BJ (cell line): ENCODE measurements at regions of chr5 and their contacts with region 1.

Region 1: GRCh38 chr5:57298295-57298984 is 124.6 kb downstream of the GPBP1 start:
- DNase-seq: peak; percentile 19
- H3K4me3 ChIP-seq: no peak overlapping the region
- H3K27me3 ChIP-seq: no peaks in the 10 kb centered on the region
- CTCF ChIP-seq: peak; percentile 86

Region 2: GRCh38 chr5:57172466-57173031 is 125.9 kb before region 1 on chr5:
- CTCF ChIA-PET with region 1: no interaction called
- POLR2A ChIA-PET with region 1: no interaction called
- DNase-seq: no peak
- H3K4me3 ChIP-seq: peak overlapping the region; percentile 98
- H3K27me3 ChIP-seq: no peaks in the 10 kb centered on the region
- CTCF ChIP-seq: no peak

Region 3: DNA sequence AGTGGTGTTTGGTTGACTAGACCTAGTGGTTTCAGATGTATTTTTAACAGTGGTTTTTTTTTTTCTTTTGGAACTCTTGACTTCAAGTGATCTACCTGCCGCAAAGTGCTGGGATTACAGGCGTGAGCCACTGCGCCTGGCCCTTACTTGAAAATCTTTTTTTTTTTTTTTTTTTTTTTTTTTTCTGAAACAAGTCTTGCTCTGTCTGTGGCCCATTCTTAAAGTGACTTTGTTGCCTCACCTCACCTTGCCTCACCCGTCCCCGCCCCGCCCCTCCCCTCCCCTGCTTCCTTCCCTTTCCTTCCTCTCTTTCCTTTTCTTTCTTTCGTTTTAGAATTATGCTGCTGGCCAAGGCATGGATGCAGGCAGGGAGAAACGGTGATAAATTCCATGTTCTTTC is 98.6 kb before region 1 on chr5:
- CTCF ChIA-PET with region 1: no interaction called
- POLR2A ChIA-PET with region 1: no interaction called
- DNase-seq: no peak
- H3K4me3 ChIP-seq: no peak overlapping the region
- H3K27me3 ChIP-seq: no peaks in the 10 kb centered on the region
- CTCF ChIP-seq: no peak

Region 4: GRCh38 chr5:57316798-57317327 is 18.4 kb after region 1 on chr5:
- CTCF ChIA-PET with region 1: interaction called, 16 read pairs
- POLR2A ChIA-PET with region 1: no interaction called
- DNase-seq: peak; percentile 18
- H3K4me3 ChIP-seq: no peak overlapping the region
- H3K27me3 ChIP-seq: peaks cover 6% of the 10 kb centered on the region
- CTCF ChIP-seq: no peak

Region 5: GRCh38 chr5:57494104-57495098 is 196.0 kb after region 1 on chr5:
- CTCF ChIA-PET with region 1: interaction called, 17 read pairs
- POLR2A ChIA-PET with region 1: no interaction called
- DNase-seq: peak; percentile 74
- H3K4me3 ChIP-seq: no peak overlapping the region
- H3K27me3 ChIP-seq: no peaks in the 10 kb centered on the region
- CTCF ChIP-seq: 0 out of 2 replicates have a peak, but pooled peaks have one; percentile 16

Region 6: DNA sequence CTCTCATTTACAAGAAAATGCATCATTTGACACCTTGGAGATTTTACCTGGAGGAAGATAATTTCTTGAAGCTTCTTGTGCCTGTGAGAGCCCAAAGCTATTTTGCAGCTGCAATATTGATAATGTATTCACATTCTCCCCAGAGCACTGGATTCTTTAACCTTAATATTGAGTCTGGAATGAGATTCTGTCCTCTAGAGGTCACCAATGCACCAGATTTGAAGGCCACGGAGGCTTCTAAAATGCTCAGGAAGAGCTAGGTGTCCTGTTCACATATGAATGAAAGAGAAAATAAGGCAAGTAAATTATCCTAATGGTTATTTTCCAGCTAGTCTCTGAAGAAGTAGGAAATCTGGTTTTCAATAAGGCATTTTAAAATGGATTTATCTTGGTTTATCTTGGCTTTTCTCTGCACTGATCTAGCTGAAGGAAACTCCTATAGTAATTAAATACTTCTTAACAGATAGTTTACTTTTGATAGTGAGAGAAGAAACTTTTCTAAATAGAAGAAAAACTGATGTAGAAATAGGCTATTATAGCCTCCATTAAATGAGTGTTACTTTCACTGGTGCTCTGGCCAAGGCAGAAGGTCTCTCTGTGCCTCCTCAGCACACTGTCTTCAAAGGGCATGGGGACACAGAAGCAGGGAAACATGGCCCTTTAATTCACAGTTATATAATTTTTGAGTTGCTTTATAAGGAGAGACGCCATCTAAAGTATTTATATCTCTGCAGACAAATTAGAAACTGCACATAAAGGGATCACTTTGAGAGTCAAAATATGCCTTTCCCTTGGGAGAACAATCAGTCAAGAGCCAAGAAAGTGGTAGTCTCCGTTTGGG is 481.2 kb after region 1 on chr5:
- CTCF ChIA-PET with region 1: interaction called, 55 read pairs
- POLR2A ChIA-PET with region 1: no interaction called
- DNase-seq: no peak
- H3K4me3 ChIP-seq: no peak overlapping the region
- H3K27me3 ChIP-seq: no peaks in the 10 kb centered on the region
- CTCF ChIP-seq: peak; percentile 71